Head of caudate nucleus (tissue), 42 donors: ENCODE measurements at regions of chr1 and their contacts with region 1.

Region 1: DNA sequence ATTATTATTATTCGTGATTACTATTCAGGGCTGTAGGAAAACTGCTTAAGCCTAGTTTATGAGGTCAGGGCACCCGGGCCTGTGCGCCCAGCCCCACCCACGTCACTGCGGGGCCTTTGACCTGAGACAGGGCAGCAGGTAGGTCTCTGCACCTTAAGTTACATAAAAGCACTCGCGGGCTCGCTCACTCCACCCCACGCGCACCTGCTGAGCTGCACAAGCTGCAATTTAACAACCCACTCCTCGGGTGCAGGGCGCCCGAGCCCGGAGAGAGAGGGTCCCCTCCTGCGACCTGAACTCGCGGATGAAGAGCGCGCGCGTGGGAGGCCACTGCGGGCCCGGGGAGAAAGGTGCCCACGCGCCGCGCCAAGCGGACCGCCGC is 477 bp downstream of the ICMT start:
- DNase-seq: peak; percentile 39 to 86 (median 66)

Region 2: GRCh38 chr1:6199298-6200187 is 35.7 kb before region 1 on chr1 and contains the start of gene RPL22:
- intact Hi-C with region 1: loop called (anchors 2 kb)
- DNase-seq: peak; percentile 95 to 99 (median 98)